ENCODE measurements at regions of chr10 and their contacts with region 1.

Region 1: GRCh38 chr10:100518761-100519241 is 860 bp downstream of the SEC31B start:
- DNase-seq: peak; percentile 72
- H3K4me3 Mint-ChIP-seq: no peak overlapping the region
- H3K27ac Mint-ChIP-seq: no peak overlapping the region
- H3K4me1 Mint-ChIP-seq: no peaks in the 10 kb centered on the region
- H3K27me3 Mint-ChIP-seq: no peaks in the 10 kb centered on the region
- CTCF ChIP-seq: peak; percentile 63

Region 2: GRCh38 chr10:100148353-100149211 is 370.2 kb before region 1 on chr10:
- CTCF ChIA-PET with region 1: no interaction called
- POLR2A ChIA-PET with region 1: no interaction called
- intact Hi-C with region 1: no loop called
- DNase-seq: peak; percentile 96
- H3K4me3 Mint-ChIP-seq: no peak overlapping the region
- H3K27ac Mint-ChIP-seq: peak overlapping the region; percentile 84
- H3K4me1 Mint-ChIP-seq: peaks cover 28% of the 10 kb centered on the region
- H3K27me3 Mint-ChIP-seq: no peaks in the 10 kb centered on the region
- CTCF ChIP-seq: no peak

Region 3: GRCh38 chr10:100508691-100509150 is 10.1 kb before region 1 on chr10:
- CTCF ChIA-PET with region 1: interaction called, 35 read pairs
- POLR2A ChIA-PET with region 1: no interaction called
- intact Hi-C with region 1: no loop called
- DNase-seq: peak; percentile 59
- H3K4me3 Mint-ChIP-seq: no peak overlapping the region
- H3K27ac Mint-ChIP-seq: no peak overlapping the region
- H3K4me1 Mint-ChIP-seq: no peaks in the 10 kb centered on the region
- H3K27me3 Mint-ChIP-seq: no peaks in the 10 kb centered on the region
- CTCF ChIP-seq: peak; percentile 62

Region 4: DNA sequence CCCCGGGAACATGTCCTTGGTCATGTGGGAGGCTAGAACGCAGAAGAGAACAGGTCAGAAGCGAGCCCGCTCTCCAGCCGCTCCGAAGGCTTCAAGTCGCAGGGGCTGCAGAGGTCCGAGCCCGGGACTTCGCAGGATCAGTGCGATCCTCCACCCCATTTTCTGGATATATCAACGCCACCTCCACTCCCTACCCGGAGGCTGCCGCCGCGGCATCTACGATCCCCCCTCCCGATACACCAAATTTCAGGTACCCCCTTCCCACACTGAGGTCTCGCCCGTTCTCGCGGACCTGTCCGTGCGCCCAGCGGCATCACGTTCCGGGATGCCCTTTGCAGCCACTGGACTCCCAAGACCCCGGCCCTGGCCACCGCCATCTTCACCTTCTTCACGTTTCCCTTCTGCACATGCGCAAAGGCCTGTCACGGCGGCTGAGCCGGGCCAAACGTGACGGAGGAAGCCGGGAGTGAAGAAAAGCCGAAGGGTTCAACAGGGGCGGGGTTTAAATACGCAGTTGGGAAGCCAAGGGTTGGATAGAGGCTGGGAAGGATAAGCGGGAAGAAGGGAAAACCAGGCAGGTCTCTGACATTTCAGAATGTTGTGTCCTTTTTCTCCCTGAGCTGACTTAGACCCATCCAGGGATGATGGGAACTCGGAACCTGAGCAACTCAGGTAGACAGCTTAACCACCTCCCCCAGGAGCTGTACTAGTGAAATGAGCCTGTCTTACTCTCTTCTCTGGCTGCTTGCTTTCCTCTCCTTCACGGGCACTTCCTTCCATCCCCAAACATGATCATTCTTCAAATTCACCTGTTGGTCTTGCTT is 10.9 kb after region 1 on chr10 and contains the start of gene NDUFB8:
- CTCF ChIA-PET with region 1: interaction called, 24 read pairs
- POLR2A ChIA-PET with region 1: interaction called, 7 read pairs
- intact Hi-C with region 1: no loop called
- DNase-seq: peak; percentile 82
- H3K4me3 Mint-ChIP-seq: peak within 1 kb of the TSS; percentile 90
- H3K27ac Mint-ChIP-seq: peak within 1 kb of the TSS; percentile 94
- H3K4me1 Mint-ChIP-seq: peaks cover 12% of the 10 kb centered on the region
- H3K27me3 Mint-ChIP-seq: no peaks in the 10 kb centered on the region
- CTCF ChIP-seq: no peak
- total RNA-seq, gene NDUFB8: 194 and 197 TPM in 2 replicates

Region 5: GRCh38 chr10:100535715-100536353 is 17.0 kb after region 1 on chr10 and contains the start of gene HIF1AN:
- CTCF ChIA-PET with region 1: interaction called, 10 read pairs
- POLR2A ChIA-PET with region 1: interaction called, 10 read pairs
- intact Hi-C with region 1: no loop called
- DNase-seq: peak; percentile 94
- H3K4me3 Mint-ChIP-seq: no peak within 1 kb of the TSS
- H3K27ac Mint-ChIP-seq: no peak within 1 kb of the TSS
- H3K4me1 Mint-ChIP-seq: peaks cover 7% of the 10 kb centered on the region
- H3K27me3 Mint-ChIP-seq: no peaks in the 10 kb centered on the region
- CTCF ChIP-seq: peak; percentile 87
- total RNA-seq, gene HIF1AN: 40.1 and 41.0 TPM in 2 replicates

Region 6: DNA sequence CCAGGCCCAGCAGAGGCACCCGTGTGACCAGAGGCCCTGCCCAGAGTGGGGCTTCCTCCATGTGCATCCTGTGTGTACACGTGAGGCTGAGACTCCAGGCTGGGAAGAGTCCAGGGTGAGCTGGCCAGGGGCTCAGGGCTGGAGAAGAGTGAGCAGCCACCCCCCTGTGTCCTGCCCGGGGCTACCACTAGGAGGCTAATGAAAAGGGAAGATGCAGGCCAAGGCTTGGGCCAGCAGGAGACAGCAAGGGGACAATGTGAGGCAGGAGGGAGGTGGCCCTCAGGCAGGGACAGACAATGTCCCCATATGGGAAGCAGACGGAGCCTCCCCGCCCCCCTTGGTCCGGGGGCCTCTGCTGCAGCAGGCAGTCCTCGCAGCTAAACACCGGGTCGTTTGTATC is 119.0 kb after region 1 on chr10:
- CTCF ChIA-PET with region 1: no interaction called
- POLR2A ChIA-PET with region 1: no interaction called
- intact Hi-C with region 1: no loop called
- DNase-seq: peak; percentile 9
- H3K4me3 Mint-ChIP-seq: no peak overlapping the region
- H3K27ac Mint-ChIP-seq: no peak overlapping the region
- H3K4me1 Mint-ChIP-seq: no peaks in the 10 kb centered on the region
- H3K27me3 Mint-ChIP-seq: peaks cover 69% of the 10 kb centered on the region
- CTCF ChIP-seq: peak; percentile 26

Region 7: DNA sequence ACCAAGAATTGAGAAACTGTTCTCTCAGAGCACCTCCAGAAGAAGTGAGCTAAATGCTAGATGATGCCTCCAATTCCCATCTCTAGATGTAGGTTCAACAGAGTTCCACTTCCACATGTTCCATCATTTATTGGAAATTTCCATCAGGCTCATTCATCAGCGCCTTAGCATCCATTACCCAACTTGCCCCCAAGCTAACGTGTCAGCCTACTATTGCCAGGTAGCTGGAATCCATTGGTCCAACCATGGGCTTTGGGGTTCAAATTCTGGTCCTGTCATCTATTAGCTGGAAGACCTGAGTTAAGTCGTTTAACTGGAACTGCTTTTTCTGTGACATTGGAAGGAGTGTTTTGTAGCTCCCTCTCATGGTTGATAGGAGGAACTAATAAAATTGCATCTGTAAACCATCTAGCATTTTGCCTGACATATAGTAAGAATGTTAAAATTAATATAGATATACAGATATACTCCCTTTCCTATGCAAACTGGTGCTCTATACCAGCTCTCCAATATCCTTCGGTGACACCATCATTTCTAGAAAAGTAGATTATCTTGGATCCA is 370.1 kb after region 1 on chr10:
- CTCF ChIA-PET with region 1: interaction called, 10 read pairs
- POLR2A ChIA-PET with region 1: no interaction called
- intact Hi-C with region 1: no loop called
- DNase-seq: no peak
- H3K4me3 Mint-ChIP-seq: no peak overlapping the region
- H3K27ac Mint-ChIP-seq: no peak overlapping the region
- H3K4me1 Mint-ChIP-seq: peaks cover 12% of the 10 kb centered on the region
- H3K27me3 Mint-ChIP-seq: no peaks in the 10 kb centered on the region
- CTCF ChIP-seq: peak; percentile 5

Measured in MCF 10A (cell line).